ENCODE measurements at regions of chr18 and their contacts with region 1.

Region 1: GRCh38 chr18:30376515-30376914 is 666.0 kb downstream of the DSC3 start:
- DNase-seq: no peak
- ATAC-seq: peak; percentile 77
- H3K4me3 ChIP-seq: no peak overlapping the region
- H3K27ac ChIP-seq: no peak overlapping the region
- H3K4me1 ChIP-seq: no peaks in the 10 kb centered on the region
- H3K27me3 ChIP-seq: no peaks in the 10 kb centered on the region
- CTCF ChIP-seq: peak in 2 of 3 experiments; percentile 11 to 46; a peak in 2 of 6 replicates
- EP300 ChIP-seq: no peak
- POLR2A ChIP-seq: no peak
- RAD21 ChIP-seq: no peak

Region 2: DNA sequence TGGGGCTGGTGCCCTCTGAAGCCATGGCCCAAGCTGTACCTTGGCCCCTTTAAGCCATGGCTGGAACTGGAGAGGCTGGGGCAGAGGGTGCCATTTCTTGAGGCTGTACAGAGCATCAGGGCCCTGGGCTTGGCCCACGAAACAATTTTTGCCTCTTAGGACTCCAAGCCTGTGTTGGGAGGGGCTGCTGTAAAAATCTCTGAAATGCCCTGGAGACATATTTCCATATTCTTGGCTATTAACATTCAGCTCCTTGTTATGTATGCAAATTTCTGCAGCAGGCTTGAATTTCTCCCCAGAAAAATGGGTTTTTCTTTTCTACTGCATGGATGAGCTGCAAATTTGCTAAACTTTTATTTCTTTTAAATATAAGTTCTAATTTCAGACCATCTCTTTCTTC is 168.0 kb before region 1 on chr18:
- CTCF ChIA-PET with region 1: no interaction called
- POLR2A ChIA-PET with region 1: no interaction called
- RAD21 ChIA-PET with region 1: no interaction called
- SMC1A ChIA-PET with region 1: no interaction called
- in situ Hi-C with region 1: no loop called
- intact Hi-C with region 1: no loop called
- DNase-seq: no peak
- ATAC-seq: no peak
- H3K4me3 ChIP-seq: no peak overlapping the region
- H3K27ac ChIP-seq: no peak overlapping the region
- H3K4me1 ChIP-seq: no peaks in the 10 kb centered on the region
- H3K27me3 ChIP-seq: no peaks in the 10 kb centered on the region
- CTCF ChIP-seq: no peak
- EP300 ChIP-seq: no peak
- POLR2A ChIP-seq: no peak
- RAD21 ChIP-seq: no peak

Region 3: GRCh38 chr18:30358555-30358954 is 18.0 kb before region 1 on chr18:
- CTCF ChIA-PET with region 1: no interaction called
- POLR2A ChIA-PET with region 1: no interaction called
- RAD21 ChIA-PET with region 1: interaction called, 3 read pairs
- SMC1A ChIA-PET with region 1: interaction called, 3 read pairs
- in situ Hi-C with region 1: no loop called
- intact Hi-C with region 1: loop called (anchors 2 kb)
- DNase-seq: no peak
- ATAC-seq: peak; percentile 23
- H3K4me3 ChIP-seq: no peak overlapping the region
- H3K27ac ChIP-seq: no peak overlapping the region
- H3K4me1 ChIP-seq: no peaks in the 10 kb centered on the region
- H3K27me3 ChIP-seq: no peaks in the 10 kb centered on the region
- CTCF ChIP-seq: no peak
- EP300 ChIP-seq: no peak
- POLR2A ChIP-seq: no peak
- RAD21 ChIP-seq: no peak

Region 4: GRCh38 chr18:30889519-30890301 is 513.2 kb after region 1 on chr18:
- CTCF ChIA-PET with region 1: interaction called, 6 read pairs
- POLR2A ChIA-PET with region 1: no interaction called
- RAD21 ChIA-PET with region 1: interaction called, 10 read pairs
- SMC1A ChIA-PET with region 1: interaction called, 7 read pairs
- in situ Hi-C with region 1: no loop called
- intact Hi-C with region 1: no loop called
- DNase-seq: no peak
- ATAC-seq: no peak
- H3K4me3 ChIP-seq: no peak overlapping the region
- H3K27ac ChIP-seq: no peak overlapping the region
- H3K4me1 ChIP-seq: no peaks in the 10 kb centered on the region
- H3K27me3 ChIP-seq: peaks cover 0 to 1% of the 10 kb centered on the region in 2 experiments; a peak in 1 of 4 replicates
- CTCF ChIP-seq: peak in 2 of 3 experiments; percentile 12 to 51; a peak in 3 of 6 replicates
- EP300 ChIP-seq: no peak
- POLR2A ChIP-seq: no peak
- RAD21 ChIP-seq: peak; percentile 31; the same call in 1 of the 2 replicates

Measured in GM12878 (cell line).